CD8-positive, alpha-beta T cell (primary cell): ENCODE measurements at regions of chr21 and their contacts with region 1.

Region 1: GRCh38 chr21:43975495-43975993 is 36.6 kb upstream of the TRAPPC10 start:
- DNase-seq: peak; percentile 72 to 89 (median 81)
- ATAC-seq: peak; percentile 98
- H3K4me3 ChIP-seq: no peak overlapping the region
- H3K4me3 Mint-ChIP-seq: no peak overlapping the region
- H3K27ac ChIP-seq: no peak overlapping the region
- H3K27ac Mint-ChIP-seq: no peak overlapping the region
- H3K4me1 ChIP-seq: no peaks in the 10 kb centered on the region
- H3K4me1 Mint-ChIP-seq: peaks cover 14% of the 10 kb centered on the region
- H3K27me3 ChIP-seq: no peaks in the 10 kb centered on the region
- H3K27me3 Mint-ChIP-seq: no peaks in the 10 kb centered on the region
- CTCF ChIP-seq: peak; percentile 95

Region 2: DNA sequence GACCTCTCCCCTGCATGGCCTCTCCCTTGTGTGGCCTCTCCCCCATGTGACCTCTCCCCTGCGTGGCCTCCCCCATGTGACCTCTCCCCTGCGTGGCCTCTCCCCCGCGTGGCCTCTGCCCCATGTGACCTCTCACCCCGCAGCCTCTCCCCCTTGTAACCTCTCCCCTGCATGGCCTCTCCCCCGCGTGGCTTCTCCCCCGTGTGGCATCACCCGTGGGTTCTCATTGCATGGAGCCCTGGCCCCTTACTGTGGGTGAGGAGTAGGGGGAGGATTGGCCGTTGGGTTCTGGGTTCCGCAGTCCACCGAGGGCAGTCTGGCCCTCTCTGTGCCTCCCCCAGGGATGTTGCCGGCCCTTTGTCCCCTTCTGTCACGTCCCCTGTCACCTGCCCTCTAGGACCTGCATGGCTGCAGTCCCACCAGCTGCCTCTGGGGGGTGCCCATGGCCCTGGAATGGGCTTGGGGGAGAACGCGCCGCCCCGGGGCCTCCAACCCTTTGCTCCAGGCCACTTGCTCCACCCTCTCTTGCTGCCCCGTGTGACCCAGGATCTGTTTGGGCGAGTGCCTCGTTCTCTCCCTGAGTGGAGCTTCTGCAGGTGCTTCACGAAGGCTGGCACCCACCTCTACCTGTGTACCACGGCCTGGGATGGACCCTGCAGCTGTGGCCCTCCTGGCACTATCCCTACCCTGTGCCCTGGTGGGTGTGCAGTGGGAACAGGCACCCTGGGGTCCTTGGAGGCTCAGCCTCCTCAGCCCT is 164.9 kb before region 1 on chr21:
- CTCF ChIA-PET with region 1: interaction called, 7 read pairs
- POLR2A ChIA-PET with region 1: no interaction called
- intact Hi-C with region 1: loop called in 1 of 2 experiments (anchors 1 kb)
- DNase-seq: peak; percentile 81 to 93 (median 84)
- ATAC-seq: peak; percentile 98
- H3K4me3 ChIP-seq: no peak overlapping the region
- H3K4me3 Mint-ChIP-seq: no peak overlapping the region
- H3K27ac ChIP-seq: no peak overlapping the region
- H3K27ac Mint-ChIP-seq: no peak overlapping the region
- H3K4me1 ChIP-seq: peaks cover 9% of the 10 kb centered on the region
- H3K4me1 Mint-ChIP-seq: peaks cover 7% of the 10 kb centered on the region
- H3K27me3 ChIP-seq: no peaks in the 10 kb centered on the region
- H3K27me3 Mint-ChIP-seq: no peaks in the 10 kb centered on the region
- CTCF ChIP-seq: peak; percentile 86

Region 3: DNA sequence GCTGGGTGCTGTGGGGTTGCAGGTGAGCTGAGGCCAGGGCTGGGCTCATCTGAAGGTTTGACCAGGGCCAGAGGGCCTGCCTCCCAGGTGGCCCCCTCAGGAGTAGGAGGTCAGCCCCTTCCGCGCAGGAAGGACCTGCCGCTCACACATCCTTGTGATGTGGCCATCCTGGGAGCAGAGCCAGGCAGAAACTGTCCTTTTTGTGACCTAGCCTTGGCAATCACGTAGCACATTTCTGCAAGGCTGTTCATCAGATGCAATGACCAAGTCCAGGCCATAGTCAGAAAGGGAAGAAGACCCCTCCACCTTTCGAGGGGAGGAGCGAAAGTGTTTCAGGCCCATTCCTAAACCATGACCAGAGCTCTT is 18.9 kb before region 1 on chr21:
- CTCF ChIA-PET with region 1: interaction called, 18 read pairs
- POLR2A ChIA-PET with region 1: interaction called, 3 read pairs
- intact Hi-C with region 1: no loop called
- DNase-seq: no peak
- ATAC-seq: no peak
- H3K4me3 ChIP-seq: no peak overlapping the region
- H3K4me3 Mint-ChIP-seq: no peak overlapping the region
- H3K27ac ChIP-seq: no peak overlapping the region
- H3K27ac Mint-ChIP-seq: no peak overlapping the region
- H3K4me1 ChIP-seq: no peaks in the 10 kb centered on the region
- H3K4me1 Mint-ChIP-seq: peaks cover 20% of the 10 kb centered on the region
- H3K27me3 ChIP-seq: no peaks in the 10 kb centered on the region
- H3K27me3 Mint-ChIP-seq: no peaks in the 10 kb centered on the region
- CTCF ChIP-seq: no peak